Activated T-helper 2 cell treated with anti-CD3 and anti-CD28 coated beads, Interferon-gamma antibody, Interleukin-2, Interleukin-4, amounts not matched to agents 10 μg/mL and 5 μg/mL and 100 μg/mL, durations not matched to agents 14 hours and 24 hours and 36 hours (primary cell): ENCODE measurements at regions of chr22 and their contacts with region 1.

Region 1: DNA sequence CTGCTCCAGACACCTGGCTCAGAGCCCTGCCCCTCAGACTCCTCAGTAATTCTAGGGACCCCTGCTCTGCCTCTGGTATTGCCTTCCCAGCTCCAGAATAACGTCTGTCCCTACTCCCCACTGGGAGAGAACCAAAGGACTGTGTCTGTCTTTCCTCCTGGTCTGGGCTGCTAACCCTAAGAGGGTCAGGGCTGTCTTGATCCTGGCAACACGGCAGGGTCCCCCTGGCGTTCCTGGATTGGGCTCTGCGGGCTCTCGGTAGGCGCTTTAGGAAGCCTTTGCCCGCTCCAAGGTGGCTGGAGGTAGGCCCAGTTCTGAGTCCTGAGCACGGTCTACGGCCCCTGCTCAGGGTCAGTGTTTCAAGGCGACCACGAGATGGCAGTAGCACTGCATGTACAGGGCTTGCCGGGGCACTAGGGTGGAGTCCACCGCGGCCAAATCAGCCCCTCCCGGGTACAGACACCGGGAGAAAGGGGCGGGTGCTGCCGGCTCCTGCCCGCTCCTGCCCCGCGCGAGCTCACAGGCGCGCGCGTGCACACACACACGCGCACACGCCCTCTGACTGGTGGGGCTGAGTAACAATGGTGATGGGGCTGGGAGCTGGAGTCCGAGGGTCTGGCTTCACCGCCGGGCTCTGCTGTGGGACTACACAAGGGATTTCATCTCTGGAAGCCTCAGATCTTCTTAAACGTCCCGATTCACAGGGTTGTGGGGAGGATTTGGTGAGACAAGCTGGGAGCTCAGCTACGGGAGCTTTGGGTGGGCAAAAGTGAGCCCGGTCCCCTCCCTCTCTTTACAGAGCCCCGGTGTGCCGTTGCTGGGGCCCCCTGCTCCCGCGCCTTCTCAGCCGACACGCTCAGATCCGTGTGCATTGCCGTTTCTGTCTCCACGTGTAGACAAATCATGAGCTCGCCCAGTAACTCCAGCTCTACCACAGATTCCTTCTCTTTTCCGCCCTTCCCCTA is 30.1 kb upstream of the HMOX1 start:
- DNase-seq: peak; percentile 84
- H3K4me3 Mint-ChIP-seq: peak overlapping the region; percentile 79
- H3K27ac Mint-ChIP-seq: peak overlapping the region; percentile 58
- H3K4me1 Mint-ChIP-seq: peaks cover 25% of the 10 kb centered on the region
- H3K27me3 Mint-ChIP-seq: no peaks in the 10 kb centered on the region

Region 2: GRCh38 chr22:35380547-35381423 is 30.0 kb after region 1 on chr22 and contains the start of gene HMOX1:
- intact Hi-C with region 1: loop called (anchors 2 kb)
- DNase-seq: peak; percentile 50
- H3K4me3 Mint-ChIP-seq: peak within 1 kb of the TSS; percentile 57
- H3K27ac Mint-ChIP-seq: no peak within 1 kb of the TSS
- H3K4me1 Mint-ChIP-seq: peaks cover 17% of the 10 kb centered on the region
- H3K27me3 Mint-ChIP-seq: peaks cover 18% of the 10 kb centered on the region
- total RNA-seq, gene HMOX1: 1.0 and 1.3 TPM in 2 replicates

Region 3: DNA sequence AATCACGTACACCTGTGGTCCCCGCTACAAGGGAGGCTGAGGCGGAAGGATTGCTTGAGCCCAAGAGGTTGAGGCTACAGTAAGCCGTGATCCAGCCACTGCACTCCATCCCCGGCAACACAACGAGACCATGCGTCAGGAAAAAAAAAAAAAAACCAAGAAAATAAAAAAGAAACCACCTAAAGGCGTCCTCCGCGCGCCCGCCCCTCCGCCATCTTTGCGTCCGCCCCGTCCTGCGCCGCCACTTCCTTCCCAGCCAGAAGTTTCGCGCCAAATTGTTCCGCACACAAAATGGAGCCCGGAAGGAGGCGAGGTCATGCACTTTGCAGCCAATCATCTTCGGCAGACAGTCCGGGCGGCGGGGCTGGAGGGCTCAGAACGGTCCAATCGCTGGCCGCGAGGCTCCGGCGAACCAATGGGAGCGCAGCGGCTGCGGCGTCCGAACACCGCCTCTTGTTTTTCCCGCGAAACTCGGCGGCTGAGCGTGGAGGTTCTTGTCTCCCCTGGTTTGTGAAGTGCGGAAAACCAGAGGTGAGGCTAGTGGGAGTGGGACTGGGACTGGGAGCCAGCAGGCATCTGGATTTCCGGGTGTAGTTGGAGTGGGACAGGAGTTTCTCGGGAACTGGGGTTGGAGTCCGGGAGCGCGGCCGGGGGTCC is 49.0 kb after region 1 on chr22 and contains the start of gene MCM5:
- intact Hi-C with region 1: loop called (anchors 2 kb)
- DNase-seq: peak; percentile 98
- H3K4me3 Mint-ChIP-seq: peak within 1 kb of the TSS; percentile 99
- H3K27ac Mint-ChIP-seq: peak within 1 kb of the TSS; percentile 99
- H3K4me1 Mint-ChIP-seq: peaks cover 18% of the 10 kb centered on the region
- H3K27me3 Mint-ChIP-seq: no peaks in the 10 kb centered on the region
- total RNA-seq, gene MCM5: 270 and 286 TPM in 2 replicates

Region 4: GRCh38 chr22:35582861-35583670 is 232.2 kb after region 1 on chr22:
- intact Hi-C with region 1: loop called (anchors 1 kb)
- DNase-seq: peak; percentile 36
- H3K4me3 Mint-ChIP-seq: no peak overlapping the region
- H3K27ac Mint-ChIP-seq: no peak overlapping the region
- H3K4me1 Mint-ChIP-seq: no peaks in the 10 kb centered on the region
- H3K27me3 Mint-ChIP-seq: no peaks in the 10 kb centered on the region

Region 5: GRCh38 chr22:36123673-36124630 is 773.1 kb after region 1 on chr22:
- intact Hi-C with region 1: loop called (anchors 10 kb)
- DNase-seq: peak; percentile 90
- H3K4me3 Mint-ChIP-seq: peak overlapping the region; percentile 32
- H3K27ac Mint-ChIP-seq: peak overlapping the region; percentile 81
- H3K4me1 Mint-ChIP-seq: peaks cover 7% of the 10 kb centered on the region
- H3K27me3 Mint-ChIP-seq: peaks cover 13% of the 10 kb centered on the region